ENCODE measurements at regions of chr10 and their contacts with region 1.

Region 1: DNA sequence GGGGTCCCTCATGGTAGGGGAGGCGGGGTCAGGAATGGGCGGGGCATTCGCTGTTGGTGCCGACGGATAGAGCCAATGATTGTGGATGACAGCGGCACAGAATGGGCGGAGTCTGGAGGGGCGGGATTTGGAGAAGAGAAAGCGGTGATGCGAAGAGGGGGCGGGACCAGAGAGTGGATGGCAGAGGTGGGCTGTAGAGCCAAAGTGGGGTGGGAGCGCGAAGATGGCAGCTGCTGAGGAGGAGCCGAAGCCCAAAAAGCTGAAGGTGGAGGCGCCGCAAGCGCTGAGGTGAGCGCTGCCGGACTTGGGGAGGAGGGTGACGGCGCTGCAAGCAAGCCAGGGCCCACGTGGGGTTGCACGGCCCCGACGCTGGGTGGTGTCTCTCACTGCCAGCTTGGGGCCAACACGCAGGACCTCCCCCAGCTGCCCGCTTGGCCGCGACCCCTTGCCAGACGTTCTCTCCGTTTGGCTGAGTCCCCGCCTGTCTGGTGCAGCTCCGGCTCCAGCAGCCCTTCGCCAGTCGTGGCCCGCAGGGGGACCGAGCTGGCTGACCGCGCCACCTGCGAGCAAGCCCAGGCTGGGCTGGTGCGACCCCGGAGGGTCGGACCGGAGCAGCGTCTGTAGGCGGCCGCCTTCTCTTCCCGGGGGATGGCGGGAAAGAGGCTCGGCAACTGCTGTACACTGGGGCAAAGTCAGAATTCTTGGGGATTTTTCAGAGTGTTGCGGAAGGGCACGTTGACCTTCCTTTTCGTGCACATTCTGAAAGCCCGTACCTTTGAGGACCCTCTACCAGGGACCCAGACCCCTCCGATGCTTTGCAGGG is at the start of gene ADK:
- DNase-seq: peak; percentile 97 to 100 (median 99)
- H3K4me3 ChIP-seq: peak within 1 kb of the TSS; percentile 59 to 99 (median 90)
- H3K27ac ChIP-seq: peak within 1 kb of the TSS; percentile 31 to 96 (median 90)
- H3K27me3 ChIP-seq: no peaks in the 10 kb centered on the region
- CTCF ChIP-seq: peak in 48 of 56 donors; percentile 7 to 60 (median 34)
- total RNA-seq, gene ADK: 26.7 to 48.2 (median 34.8) TPM

Region 2: DNA sequence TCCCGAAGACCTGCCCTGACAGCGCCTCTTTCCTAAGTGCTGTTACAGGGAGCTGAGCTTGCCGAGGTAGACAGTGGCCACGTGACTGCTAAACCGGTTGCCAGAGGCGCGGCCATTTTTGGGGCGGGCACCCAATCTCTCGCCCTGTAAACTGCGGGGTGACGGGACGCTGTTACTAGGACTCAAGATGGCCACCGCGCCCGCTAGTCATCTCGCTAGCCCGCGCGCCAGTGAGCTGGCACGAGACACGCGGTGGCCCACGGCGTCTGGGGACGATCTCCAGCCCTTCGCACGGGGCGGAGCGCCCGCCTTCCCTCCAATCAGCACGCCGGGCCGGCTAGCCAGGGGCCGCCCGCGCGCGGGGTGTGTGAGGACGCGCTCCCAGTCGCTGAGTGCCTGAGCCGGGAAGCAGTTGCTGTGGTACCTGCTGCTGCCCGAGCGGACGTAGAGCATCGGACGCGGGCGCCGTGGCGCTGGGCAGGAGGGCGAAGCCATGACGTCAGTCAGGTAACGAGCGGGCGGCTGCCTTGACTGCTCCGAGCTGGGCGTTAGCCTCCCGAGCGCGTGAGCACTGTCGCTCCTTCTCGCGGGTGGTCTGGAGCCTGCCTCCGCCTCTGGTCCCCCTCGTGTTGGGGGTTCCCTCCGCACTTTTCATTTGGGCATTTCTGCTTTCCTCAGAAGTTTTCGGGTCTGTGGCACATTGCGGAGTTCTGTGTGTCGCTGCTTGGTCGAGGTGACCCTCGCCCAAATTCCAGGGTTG is 25.3 kb after region 1 on chr10:
- intact Hi-C with region 1: loop called (anchors 2 kb)
- DNase-seq: peak; percentile 89 to 96 (median 94)
- H3K4me3 ChIP-seq: peak overlapping the region; percentile 42 to 99 (median 85)
- H3K27ac ChIP-seq: peak overlapping the region; percentile 53 to 96 (median 89)
- H3K27me3 ChIP-seq: no peaks in the 10 kb centered on the region
- CTCF ChIP-seq: peak in 26 of 56 donors; percentile 7 to 55 (median 28)

Measured in dorsolateral prefrontal cortex (tissue), 120 donors.